HEK293T (cell line): ENCODE measurements at regions of chr11 and their contacts with region 1.

Region 1: DNA sequence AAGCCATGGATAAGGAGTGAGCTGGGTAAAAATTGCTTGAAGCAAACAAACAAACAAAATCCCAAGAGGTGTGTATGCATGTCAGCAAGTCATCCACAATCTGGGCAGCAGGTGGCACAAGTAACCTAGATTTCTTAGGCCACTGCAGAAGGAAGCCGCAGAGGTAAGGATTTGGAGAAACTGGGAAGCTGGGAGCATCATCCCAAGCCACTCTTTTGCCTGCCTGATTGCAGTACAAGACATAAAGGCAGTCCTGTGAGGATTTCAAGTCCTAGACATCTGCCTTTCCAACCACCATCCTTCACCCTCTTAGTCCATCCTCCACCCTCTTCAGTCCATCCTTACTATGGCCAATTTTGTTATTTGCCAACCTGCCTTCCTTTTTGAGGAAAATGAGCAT is 67.2 kb upstream of the BMAL1 start:
- DNase-seq: peak; percentile 57

Region 2: GRCh38 chr11:12755510-12756453 is 454.6 kb before region 1 on chr11:
- CTCF ChIA-PET with region 1: no interaction called
- POLR2A ChIA-PET with region 1: no interaction called
- DNase-seq: no peak

Region 3: DNA sequence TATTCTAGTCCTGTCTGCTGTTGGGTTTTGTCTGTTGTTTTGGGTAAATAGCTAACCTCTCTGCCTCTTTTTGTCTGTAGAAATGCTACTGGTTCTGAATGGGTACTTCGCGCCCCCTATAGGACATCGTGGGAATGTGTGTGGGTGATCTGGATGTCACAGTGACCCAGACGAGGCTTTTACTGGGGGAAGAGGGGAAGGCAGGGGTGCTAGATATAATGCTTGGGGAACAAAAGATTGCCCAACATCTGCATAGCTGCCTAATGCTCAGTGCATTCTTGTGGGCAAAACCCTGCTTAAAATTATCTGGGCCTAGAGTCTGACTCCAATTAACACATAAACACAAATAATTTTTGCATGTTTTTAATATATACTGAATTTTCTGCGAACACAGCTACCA is 124.9 kb after region 1 on chr11:
- CTCF ChIA-PET with region 1: interaction called, 12 read pairs
- POLR2A ChIA-PET with region 1: no interaction called
- DNase-seq: peak; percentile 71

Region 4: GRCh38 chr11:13343931-13344717 is 133.7 kb after region 1 on chr11:
- CTCF ChIA-PET with region 1: interaction called, 22 read pairs
- POLR2A ChIA-PET with region 1: no interaction called
- DNase-seq: peak; percentile 72